ENCODE measurements at regions of chr15 and their contacts with region 1.

Region 1: GRCh38 chr15:35912196-35912595 is 366.2 kb upstream of the DPH6 start:
- DNase-seq: peak; percentile 16
- H3K4me3 ChIP-seq: no peak overlapping the region
- H3K27ac ChIP-seq: no peak overlapping the region
- H3K4me1 ChIP-seq: peaks cover 0 to 7% of the 10 kb centered on the region in 2 experiments; a peak in 2 of 4 replicates
- H3K27me3 ChIP-seq: no peaks in the 10 kb centered on the region
- CTCF ChIP-seq: peak; percentile 35
- EP300 ChIP-seq: no peak
- RAD21 ChIP-seq: peak; percentile 69

Region 2: DNA sequence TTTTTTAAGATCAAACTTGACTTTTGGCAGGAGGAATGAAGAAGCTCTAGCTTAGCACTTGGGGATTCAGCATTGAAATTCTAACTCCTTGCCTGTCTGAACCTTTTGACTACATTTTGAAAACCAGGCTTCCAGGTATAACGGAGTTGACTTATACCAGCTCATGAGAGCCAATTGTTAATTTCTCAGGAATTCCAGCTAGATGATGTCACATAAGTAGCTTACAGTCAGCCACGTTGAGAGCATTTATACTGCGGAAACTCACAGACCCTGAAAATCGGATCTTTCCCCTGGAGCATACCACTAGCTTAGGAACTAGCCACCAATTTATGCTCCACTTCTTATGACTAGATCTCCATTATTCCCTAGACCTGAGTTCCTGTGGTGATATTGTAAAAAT is 44.8 kb before region 1 on chr15:
- CTCF ChIA-PET with region 1: no interaction called
- POLR2A ChIA-PET with region 1: no interaction called
- DNase-seq: no peak
- H3K4me3 ChIP-seq: no peak overlapping the region
- H3K27ac ChIP-seq: no peak overlapping the region
- H3K4me1 ChIP-seq: peaks cover 4 to 8% of the 10 kb centered on the region in 2 experiments; a peak in 2 of 4 replicates
- H3K27me3 ChIP-seq: no peaks in the 10 kb centered on the region
- CTCF ChIP-seq: no peak
- EP300 ChIP-seq: no peak
- RAD21 ChIP-seq: no peak

Region 3: DNA sequence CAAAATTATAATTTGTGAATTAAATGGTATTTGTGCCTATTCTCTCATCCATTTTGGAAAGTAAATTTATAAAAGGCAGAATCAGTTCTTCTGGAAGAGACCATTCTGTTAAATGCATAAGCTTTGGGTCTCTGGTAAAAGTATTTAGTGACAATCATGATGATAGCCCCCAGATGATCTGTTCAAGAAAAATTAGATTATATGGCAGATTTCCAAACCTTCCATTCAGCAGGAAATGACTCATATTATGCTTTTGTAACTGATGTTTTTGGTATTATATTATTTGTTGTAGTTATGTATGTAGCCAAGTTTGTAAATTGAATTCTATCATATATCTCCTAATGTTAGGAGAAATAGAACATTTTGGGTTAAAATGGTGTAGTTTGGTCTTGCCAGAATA is 25.4 kb before region 1 on chr15:
- CTCF ChIA-PET with region 1: interaction called, 12 read pairs
- POLR2A ChIA-PET with region 1: no interaction called
- DNase-seq: peak; percentile 20
- H3K4me3 ChIP-seq: no peak overlapping the region
- H3K27ac ChIP-seq: peak overlapping the region; percentile 52 to 62
- H3K4me1 ChIP-seq: peaks cover 7 to 15% of the 10 kb centered on the region in 2 experiments; a peak in 3 of 4 replicates
- H3K27me3 ChIP-seq: no peaks in the 10 kb centered on the region
- CTCF ChIP-seq: no peak
- EP300 ChIP-seq: peak; percentile 70 to 87; a peak in 3 of 4 replicates
- RAD21 ChIP-seq: no peak; the same call in 1 of the 2 replicates

Measured in SK-N-SH (cell line).